GM12878 (cell line): ENCODE measurements at regions of chr7 and their contacts with region 1.

Region 1: DNA sequence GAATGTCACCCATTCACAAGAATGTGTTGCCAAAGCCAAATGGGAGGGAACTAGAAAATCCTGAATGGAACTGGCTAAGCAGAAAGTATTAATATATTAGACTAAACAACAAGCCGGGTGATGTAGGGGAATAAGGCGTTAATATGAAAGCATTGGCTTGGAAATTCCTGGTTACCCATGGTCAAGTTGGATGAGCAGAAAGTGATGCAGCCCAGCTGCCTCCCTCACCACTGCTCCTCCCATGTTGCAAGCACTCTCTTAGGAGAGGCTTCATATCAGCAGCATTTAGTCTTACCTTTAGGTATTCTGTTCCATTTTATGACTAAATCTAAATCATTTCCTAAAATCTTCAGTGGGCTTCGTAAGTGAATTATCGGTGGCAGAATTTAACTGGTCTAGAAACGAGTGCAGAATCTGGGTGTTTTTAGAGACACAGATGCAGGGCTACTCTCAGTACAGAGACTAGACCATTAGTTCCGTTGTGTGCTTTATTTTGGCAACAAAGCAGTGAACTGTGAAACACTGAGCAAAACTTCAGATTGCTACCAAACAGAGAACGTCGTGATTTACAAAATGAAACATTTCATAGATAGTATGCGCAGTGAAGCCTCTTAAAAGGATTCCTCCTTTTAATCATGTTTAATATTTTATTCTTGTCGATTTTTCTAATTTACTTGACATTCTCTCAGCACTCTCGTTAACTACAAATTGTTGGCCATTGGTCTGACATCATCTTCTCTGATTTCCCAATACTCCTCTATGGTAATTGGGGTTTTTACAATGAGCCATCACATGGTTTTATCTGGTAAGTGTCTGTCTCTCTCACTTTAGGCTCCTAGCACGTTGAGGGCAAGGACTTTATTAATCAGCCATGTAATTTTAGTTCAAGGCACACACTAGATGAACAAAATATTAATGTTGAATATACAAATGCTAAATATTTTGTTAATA is 22.0 kb upstream of the HGF start:
- DNase-seq: no peak
- ATAC-seq: peak; percentile 88
- H3K4me3 ChIP-seq: no peak overlapping the region
- H3K27ac ChIP-seq: no peak overlapping the region
- H3K4me1 ChIP-seq: no peaks in the 10 kb centered on the region
- H3K27me3 ChIP-seq: no peaks in the 10 kb centered on the region
- CTCF ChIP-seq: no peak
- EP300 ChIP-seq: no peak
- POLR2A ChIP-seq: no peak
- RAD21 ChIP-seq: no peak

Region 2: GRCh38 chr7:80666376-80666775 is 1125.5 kb before region 1 on chr7:
- CTCF ChIA-PET with region 1: no interaction called
- POLR2A ChIA-PET with region 1: no interaction called
- RAD21 ChIA-PET with region 1: no interaction called
- SMC1A ChIA-PET with region 1: no interaction called
- in situ Hi-C with region 1: no loop called
- intact Hi-C with region 1: no loop called
- DNase-seq: no peak
- ATAC-seq: no peak
- H3K4me3 ChIP-seq: no peak overlapping the region
- H3K27ac ChIP-seq: no peak overlapping the region
- H3K4me1 ChIP-seq: no peaks in the 10 kb centered on the region
- H3K27me3 ChIP-seq: no peaks in the 10 kb centered on the region
- CTCF ChIP-seq: no peak
- EP300 ChIP-seq: no peak
- POLR2A ChIP-seq: no peak
- RAD21 ChIP-seq: no peak

Region 3: DNA sequence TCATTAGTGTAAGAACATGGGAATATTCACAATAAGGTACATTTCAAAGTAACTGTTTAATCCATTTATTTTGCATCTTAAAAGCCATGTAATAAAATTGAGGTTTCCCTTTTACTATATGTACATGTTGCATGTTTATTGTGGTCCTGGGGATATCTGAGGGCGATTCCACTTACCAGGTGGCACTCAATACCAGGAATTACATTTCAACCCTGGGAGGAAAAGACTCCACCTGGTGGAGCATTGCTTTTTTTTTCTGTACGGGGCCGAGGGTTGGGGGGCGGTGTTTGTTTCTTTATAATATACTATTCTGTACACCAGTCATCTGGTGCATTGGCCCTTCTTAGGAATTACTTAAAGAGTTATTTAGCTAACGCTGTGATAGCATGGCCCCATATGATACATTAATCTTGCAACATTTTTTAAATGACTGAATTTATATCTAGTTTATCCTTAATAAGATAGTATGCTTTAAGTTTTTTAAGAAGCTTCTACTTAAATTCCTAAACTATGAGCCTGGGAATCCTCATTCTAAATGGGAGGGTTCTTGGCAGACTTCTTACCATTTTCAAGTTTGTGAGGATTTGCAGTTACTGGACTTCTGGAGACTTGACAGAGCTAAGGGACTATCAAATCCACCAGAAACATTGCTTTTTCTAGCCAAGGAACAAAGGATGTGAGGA is 14.8 kb before region 1 on chr7:
- CTCF ChIA-PET with region 1: interaction called, 10 read pairs
- POLR2A ChIA-PET with region 1: no interaction called
- RAD21 ChIA-PET with region 1: no interaction called
- SMC1A ChIA-PET with region 1: interaction called, 3 read pairs
- in situ Hi-C with region 1: no loop called
- intact Hi-C with region 1: no loop called
- DNase-seq: no peak
- ATAC-seq: 0 out of 3 replicates have a peak, but pooled peaks have one; percentile 15
- H3K4me3 ChIP-seq: no peak overlapping the region
- H3K27ac ChIP-seq: no peak overlapping the region
- H3K4me1 ChIP-seq: no peaks in the 10 kb centered on the region
- H3K27me3 ChIP-seq: no peaks in the 10 kb centered on the region
- CTCF ChIP-seq: no peak
- EP300 ChIP-seq: no peak
- POLR2A ChIP-seq: no peak
- RAD21 ChIP-seq: no peak